HCT116 (cell line): ENCODE measurements at regions of chr15 and their contacts with region 1.

Region 1: DNA sequence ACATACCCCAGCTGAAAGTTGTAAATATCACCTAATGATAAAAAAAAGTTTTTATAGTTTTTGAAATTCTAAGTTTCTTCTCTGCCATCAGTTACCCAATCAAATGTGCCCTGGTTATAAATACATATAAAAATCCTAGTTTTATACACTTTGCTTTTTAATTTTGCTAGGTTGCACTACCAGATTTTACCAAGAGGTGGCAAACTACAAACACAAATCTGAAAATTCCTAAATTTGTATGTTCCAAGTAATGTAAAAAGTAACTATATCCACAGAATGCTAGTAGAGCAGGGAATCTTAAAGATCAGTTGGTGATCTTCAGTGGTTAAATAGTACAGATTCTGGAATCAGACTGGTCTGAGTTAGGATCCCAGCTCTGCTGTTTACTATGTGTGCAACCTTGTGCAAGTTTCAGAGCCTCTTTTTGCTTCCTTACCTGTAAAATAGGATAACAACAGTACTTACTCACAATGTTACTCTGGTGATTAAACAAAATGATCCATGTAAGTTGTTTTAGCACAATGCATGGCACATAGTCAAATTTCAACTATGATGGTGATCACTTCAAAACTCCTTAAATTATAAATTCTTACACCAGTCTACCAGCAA is 11.0 kb downstream of the TRPM7 start:
- DNase-seq: peak; percentile 21
- ATAC-seq: no peak
- H3K4me3 ChIP-seq: no peak overlapping the region
- H3K27ac ChIP-seq: no peak overlapping the region
- H3K4me1 ChIP-seq: peaks cover 0 to 12% of the 10 kb centered on the region in 2 experiments; a peak in 2 of 4 replicates
- H3K27me3 ChIP-seq: no peaks in the 10 kb centered on the region
- CTCF ChIP-seq: peak; percentile 53 to 70 (median 64); a peak in 5 of 6 replicates
- POLR2A ChIP-seq: no peak
- RAD21 ChIP-seq: peak; percentile 74

Region 2: DNA sequence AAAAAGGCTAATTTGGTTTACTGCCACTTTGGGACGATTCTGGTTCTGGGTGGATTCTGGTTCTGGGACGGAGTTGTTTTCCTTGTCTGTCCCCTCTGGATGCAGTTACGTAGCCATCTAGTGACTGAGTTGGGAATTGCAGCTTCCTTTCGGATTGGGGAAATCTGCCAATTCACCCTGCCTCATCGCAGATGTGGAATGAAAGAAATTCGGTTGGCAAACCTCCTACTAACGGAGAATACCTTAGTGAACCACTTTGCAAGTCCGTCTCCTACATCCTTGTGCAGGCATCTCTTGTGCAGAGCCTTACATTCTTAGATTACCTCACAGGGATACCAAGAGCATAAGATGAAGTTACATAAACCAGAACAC is 201.3 kb after region 1 on chr15:
- CTCF ChIA-PET with region 1: interaction called, 4 read pairs
- POLR2A ChIA-PET with region 1: no interaction called
- RAD21 ChIA-PET with region 1: interaction called in 1 of 2 experiments, 3 read pairs
- intact Hi-C with region 1: loop called (anchors 2 kb)
- DNase-seq: peak; percentile 68
- ATAC-seq: peak; percentile 81
- H3K4me3 ChIP-seq: peak overlapping the region; percentile 8 to 34; a peak in 3 of 4 replicates
- H3K27ac ChIP-seq: no peak overlapping the region
- H3K4me1 ChIP-seq: peaks cover 0 to 10% of the 10 kb centered on the region in 2 experiments; a peak in 2 of 4 replicates
- H3K27me3 ChIP-seq: peaks cover 6% of the 10 kb centered on the region; the same call in 1 of the 2 replicates
- CTCF ChIP-seq: peak; percentile 73 to 97 (median 94)
- POLR2A ChIP-seq: no peak
- RAD21 ChIP-seq: peak; percentile 94

Region 3: DNA sequence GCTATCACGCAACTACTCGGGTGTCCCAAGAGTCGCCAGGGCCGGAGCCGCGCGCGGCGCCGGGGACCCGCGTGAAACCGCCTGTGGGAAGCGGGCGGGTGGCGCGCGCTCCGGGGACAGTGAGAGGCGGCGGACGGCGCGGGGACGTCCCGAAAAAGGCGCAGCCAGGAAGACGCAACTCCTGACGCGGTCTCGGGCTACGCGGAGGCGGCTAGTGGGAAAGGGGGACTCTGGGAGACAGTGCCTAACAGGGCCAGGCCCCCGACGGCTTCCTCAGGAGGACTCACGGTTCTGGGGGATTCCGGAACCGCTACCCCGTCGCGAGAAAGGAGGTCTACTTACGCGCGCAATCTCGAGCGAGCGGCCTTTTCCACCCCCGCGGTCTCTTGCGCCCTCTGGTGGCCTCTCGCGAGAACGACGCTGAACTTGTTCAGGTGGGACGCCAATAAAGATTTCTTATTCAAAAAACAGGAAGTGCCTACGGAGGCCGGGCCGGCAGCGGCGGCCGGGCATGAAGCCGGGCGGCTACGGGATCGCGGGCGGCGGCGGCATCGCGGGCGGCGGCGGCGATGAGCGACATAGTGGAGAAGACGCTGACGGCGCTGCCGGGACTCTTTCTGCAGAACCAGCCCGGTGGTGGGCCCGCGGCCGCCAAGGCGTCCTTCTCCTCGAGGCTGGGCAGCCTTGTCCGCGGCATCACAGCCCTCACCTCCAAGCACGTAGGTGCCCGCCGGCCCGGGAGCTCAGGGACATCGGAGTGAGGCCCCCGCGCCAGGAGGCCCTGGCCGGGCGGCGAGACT is 232.8 kb after region 1 on chr15 and contains the start of gene AP4E1:
- CTCF ChIA-PET with region 1: no interaction called
- POLR2A ChIA-PET with region 1: no interaction called
- RAD21 ChIA-PET with region 1: no interaction called
- intact Hi-C with region 1: loop called (anchors 1 kb)
- DNase-seq: peak; percentile 87
- ATAC-seq: peak; percentile 82
- H3K4me3 ChIP-seq: peak within 1 kb of the TSS; percentile 94
- H3K27ac ChIP-seq: peak within 1 kb of the TSS; percentile 88
- H3K4me1 ChIP-seq: peaks cover 10 to 21% of the 10 kb centered on the region in 2 experiments; a peak in 3 of 4 replicates
- H3K27me3 ChIP-seq: no peaks in the 10 kb centered on the region
- CTCF ChIP-seq: peak; percentile 65 to 84 (median 79); a peak in 5 of 6 replicates
- POLR2A ChIP-seq: peak; percentile 50
- RAD21 ChIP-seq: peak; percentile 91
- total RNA-seq, gene AP4E1: 10.1 TPM